Psoas muscle (tissue), 8 donors: ENCODE measurements at regions of chr3 and their contacts with region 1.

Region 1: DNA sequence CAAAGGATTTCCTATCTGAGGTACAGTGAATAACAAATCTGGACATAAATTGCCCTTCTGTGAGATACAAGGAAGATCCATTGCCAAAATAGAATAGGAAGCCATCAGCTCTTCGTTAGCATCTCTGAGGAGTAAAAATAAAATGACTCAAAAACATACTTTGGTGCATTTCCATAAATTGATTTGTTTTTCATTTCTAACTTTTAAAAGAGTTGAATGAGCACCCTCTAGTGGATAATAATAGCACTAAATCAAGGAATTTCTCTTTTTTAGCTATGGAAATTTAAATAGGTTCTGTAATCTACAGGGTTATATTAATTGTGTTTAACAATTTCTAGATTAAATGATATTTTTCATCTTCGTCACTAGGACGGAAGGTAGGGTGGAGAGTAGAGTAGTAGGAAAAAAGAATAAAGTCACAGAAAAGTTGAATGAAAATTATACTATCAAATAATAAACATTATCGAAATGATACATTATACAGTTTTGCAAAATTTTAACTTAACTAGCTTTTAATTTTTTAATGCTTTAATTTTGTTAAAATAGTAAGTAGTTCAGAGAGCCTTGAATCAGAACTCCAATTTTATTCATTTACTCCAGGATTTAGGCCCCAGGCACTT is 6.4 kb downstream of the NSUN3 start:
- DNase-seq: no peak
- ATAC-seq: no peak
- H3K4me3 ChIP-seq: no peak overlapping the region
- H3K27ac ChIP-seq: no peak overlapping the region
- H3K4me1 ChIP-seq: no peaks in the 10 kb centered on the region
- H3K27me3 ChIP-seq: no peaks in the 10 kb centered on the region
- CTCF ChIP-seq: peak; percentile 61

Region 2: GRCh38 chr3:94004301-94004910 is 64.9 kb before region 1 on chr3:
- intact Hi-C with region 1: loop called (anchors 5 kb)
- DNase-seq: no peak
- ATAC-seq: peak in 3 of 4 donors; percentile 56 to 83 (median 63)
- H3K4me3 ChIP-seq: peak overlapping the region; percentile 55
- H3K27ac ChIP-seq: no peak overlapping the region
- H3K4me1 ChIP-seq: peaks cover 4% of the 10 kb centered on the region
- H3K27me3 ChIP-seq: no peaks in the 10 kb centered on the region
- CTCF ChIP-seq: peak; percentile 74

Region 3: DNA sequence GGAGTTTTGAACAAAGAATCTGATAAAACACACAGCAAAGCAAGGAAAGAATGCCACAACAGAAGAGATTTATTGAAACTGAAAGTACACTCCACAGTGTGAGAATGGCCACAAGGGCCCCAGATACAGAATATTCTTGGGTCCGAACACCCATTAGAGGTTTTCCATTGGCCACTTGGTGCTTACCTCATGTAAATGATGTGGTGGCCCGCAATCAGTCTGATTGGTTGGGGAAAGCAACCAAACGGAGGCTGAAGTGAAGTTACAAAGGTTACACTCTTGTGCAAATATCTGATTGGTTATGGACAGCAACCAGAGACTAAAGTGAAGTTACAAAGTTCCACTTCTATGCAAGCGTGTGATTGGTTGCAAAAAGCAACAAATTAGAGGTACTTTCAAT is 14.0 kb after region 1 on chr3:
- intact Hi-C with region 1: no loop called
- DNase-seq: no peak
- ATAC-seq: no peak
- H3K4me3 ChIP-seq: no peak overlapping the region
- H3K27ac ChIP-seq: no peak overlapping the region
- H3K4me1 ChIP-seq: no peaks in the 10 kb centered on the region
- H3K27me3 ChIP-seq: no peaks in the 10 kb centered on the region
- CTCF ChIP-seq: no peak